IMR-90 (cell line): ENCODE measurements at regions of chr3 and their contacts with region 1.

Region 1: DNA sequence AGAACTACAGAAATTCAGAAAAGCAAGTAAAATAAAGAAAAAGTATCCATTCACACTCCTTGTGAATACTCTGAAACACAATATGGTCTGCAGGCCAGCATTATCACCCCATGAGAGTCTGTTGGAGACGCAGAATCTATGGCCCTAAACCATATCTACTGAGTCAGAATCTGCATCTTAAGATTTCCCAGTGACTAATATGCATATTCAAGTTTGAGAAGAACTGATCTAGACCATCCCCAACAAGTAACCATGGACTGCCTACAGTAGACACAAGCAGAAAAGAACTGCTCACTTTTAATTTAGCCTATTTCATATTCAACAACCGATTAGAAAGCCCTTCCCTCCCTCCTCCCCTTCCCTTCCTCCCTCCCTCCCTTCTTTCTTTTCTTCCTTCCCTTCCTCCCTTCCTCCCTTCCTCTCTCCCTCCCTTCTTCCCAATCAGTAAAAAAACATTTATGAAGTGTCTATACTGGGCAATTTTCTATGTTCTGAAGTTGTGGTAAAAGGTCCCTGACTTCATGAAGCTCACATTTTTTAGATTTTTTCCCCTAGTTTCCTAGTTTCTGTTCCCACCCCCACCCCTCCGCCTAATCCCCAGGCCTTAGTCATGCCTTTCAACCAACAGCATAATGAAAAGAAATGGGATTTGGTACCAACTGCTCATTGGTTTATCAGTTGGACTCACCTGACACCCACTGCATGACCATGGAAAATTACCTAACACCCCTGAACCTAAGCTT is 125.2 kb downstream of the CNTN3 start:
- DNase-seq: peak; percentile 31
- ATAC-seq: peak; percentile 65
- H3K4me3 ChIP-seq: no peak overlapping the region
- H3K27ac ChIP-seq: no peak overlapping the region
- H3K4me1 ChIP-seq: no peaks in the 10 kb centered on the region
- H3K27me3 ChIP-seq: no peaks in the 10 kb centered on the region
- CTCF ChIP-seq: no peak
- POLR2A ChIP-seq: no peak
- RAD21 ChIP-seq: no peak

Region 2: DNA sequence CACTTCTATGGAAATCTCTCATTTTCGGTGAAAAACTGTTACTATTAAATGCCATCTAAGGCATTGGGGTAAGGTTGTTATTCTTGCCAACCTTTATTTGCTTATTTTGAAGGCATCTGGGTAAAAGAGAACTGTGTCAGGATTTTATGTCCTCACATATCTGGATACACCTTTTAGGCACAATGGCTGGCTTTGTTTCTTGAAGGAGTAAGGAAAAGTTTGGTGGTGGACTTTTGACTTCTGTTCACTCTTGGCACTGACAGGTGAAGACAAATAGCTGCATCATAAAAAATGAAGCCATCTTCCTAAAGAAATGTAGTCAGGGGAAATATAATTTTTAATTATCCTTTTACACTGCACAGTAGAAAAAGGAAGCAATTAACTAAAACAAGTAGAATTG is 184.8 kb before region 1 on chr3:
- CTCF ChIA-PET with region 1: no interaction called
- POLR2A ChIA-PET with region 1: no interaction called
- dilution Hi-C with region 1: no loop called
- in situ Hi-C with region 1: no loop called
- intact Hi-C with region 1: no loop called
- DNase-seq: no peak
- ATAC-seq: no peak
- H3K4me3 ChIP-seq: no peak overlapping the region
- H3K27ac ChIP-seq: no peak overlapping the region
- H3K4me1 ChIP-seq: no peaks in the 10 kb centered on the region
- H3K27me3 ChIP-seq: no peaks in the 10 kb centered on the region
- CTCF ChIP-seq: no peak
- POLR2A ChIP-seq: no peak
- RAD21 ChIP-seq: no peak

Region 3: GRCh38 chr3:74501007-74501406 is 11.8 kb after region 1 on chr3:
- CTCF ChIA-PET with region 1: interaction called, 3 read pairs
- POLR2A ChIA-PET with region 1: interaction called, 12 read pairs
- dilution Hi-C with region 1: no loop called
- in situ Hi-C with region 1: no loop called
- intact Hi-C with region 1: no loop called
- DNase-seq: no peak
- ATAC-seq: no peak
- H3K4me3 ChIP-seq: no peak overlapping the region
- H3K27ac ChIP-seq: no peak overlapping the region
- H3K4me1 ChIP-seq: no peaks in the 10 kb centered on the region
- H3K27me3 ChIP-seq: no peaks in the 10 kb centered on the region
- CTCF ChIP-seq: no peak
- POLR2A ChIP-seq: no peak
- RAD21 ChIP-seq: no peak